ENCODE measurements at regions of chr1 and their contacts with region 1.

Region 1: DNA sequence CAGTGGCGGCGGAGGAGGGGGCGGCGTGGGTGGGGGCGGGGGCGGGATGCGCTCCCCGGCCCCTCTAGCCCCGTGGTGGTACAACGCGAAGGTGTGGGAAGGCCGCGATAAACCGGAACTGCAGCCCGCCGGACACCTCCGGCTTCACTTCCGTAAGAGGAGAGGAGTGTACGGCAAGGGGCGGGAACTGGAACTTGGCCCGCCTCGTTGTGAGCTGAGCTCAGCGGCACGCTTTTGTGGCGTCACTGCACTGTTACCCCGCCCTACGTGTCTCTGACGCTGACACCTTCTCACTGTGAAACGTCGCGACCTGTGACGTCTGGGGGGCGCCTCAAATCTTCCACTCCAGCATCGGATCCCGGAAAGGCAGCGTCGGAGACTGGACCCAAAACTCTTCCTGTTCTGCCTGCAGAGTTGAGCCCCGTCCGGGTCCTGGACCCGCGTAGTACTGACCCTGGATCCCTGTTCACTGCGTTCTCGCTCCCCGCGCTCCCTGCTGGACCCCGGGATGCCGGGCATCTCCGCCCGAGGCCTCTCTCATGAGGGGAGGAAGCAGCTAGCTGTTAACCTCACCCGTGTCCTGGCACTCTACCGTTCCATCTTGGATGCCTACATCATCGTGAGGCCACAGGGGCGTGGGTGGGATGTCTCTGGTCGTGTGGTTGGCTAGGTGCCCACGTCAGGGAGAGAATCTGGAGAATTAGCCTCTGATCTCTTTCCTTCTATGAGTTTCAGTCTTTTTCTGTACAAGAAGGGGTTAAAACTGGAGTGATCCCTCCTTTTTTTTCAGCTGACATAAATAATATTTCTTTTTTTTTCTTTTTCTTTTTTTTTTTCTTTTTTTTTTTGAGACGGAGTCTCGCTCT is at the start of gene ISG20L2:
- DNase-seq: peak; percentile 100
- H3K4me3 ChIP-seq: peak within 1 kb of the TSS; percentile 62 to 90 (median 72)
- H3K27ac ChIP-seq: peak within 1 kb of the TSS; percentile 93 to 99 (median 96)
- H3K4me1 ChIP-seq: peaks cover 0 to 48% (median 46%) of the 10 kb centered on the region in 4 donors
- H3K27me3 ChIP-seq: no peaks in the 10 kb centered on the region
- CTCF ChIP-seq: no peak
- EP300 ChIP-seq: peak in 2 of 4 donors; percentile 36 to 69
- POLR2A ChIP-seq: peak; percentile 17 to 47
- total RNA-seq, gene ISG20L2: 13.6 to 17.6 (median 16.7) TPM

Region 2: DNA sequence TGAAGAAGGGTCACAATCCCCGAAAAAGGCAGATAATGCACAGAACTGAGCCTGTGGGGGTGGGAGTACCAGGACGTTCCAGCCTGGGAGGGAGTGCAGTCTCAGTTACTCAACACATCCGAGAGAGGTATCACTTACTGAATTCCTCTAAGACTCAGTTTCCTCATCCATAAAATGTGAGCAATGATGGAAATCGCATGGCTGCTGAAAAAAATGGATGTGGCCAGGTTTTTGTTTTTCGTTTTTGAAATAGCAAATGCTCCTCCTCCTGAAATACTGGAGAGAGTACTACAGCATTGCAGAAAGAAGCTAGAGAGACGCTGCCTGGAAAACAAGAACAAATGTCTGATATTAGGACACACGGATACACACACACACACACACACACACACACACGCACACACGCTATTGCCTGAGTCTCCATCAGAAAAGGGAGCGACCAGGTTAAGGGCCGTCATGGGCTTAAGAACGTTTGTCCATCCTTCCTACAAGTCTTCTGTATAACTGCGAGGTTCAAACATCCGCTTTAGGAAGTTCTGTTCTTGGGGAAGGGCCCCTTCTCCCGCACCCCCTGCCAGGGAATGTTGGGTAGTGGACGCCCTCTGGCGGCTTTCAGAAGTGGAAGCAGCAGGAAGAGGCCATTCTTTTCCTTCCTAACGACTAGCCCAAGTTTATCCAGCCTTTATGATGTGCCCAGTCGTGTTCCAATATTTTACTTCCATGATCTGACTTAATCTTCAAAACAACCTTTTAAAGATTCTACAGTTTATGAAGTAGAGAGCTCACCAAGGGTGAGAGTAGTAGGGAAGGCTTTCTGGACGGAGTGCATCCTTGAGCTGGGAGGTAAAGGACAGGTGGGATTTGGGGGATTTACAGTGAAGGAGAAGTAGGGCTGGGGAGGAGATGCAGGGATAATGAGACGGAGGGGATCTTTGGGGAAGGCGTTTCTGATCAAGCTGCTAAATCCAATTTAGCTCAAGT is 50.9 kb before region 1 on chr1:
- intact Hi-C with region 1: no loop called
- DNase-seq: peak; percentile 88
- H3K4me3 ChIP-seq: peak overlapping the region; percentile 29 to 53 (median 44)
- H3K27ac ChIP-seq: peak overlapping the region; percentile 42 to 79 (median 72)
- H3K4me1 ChIP-seq: peaks cover 0 to 43% (median 33%) of the 10 kb centered on the region in 4 donors
- H3K27me3 ChIP-seq: peaks cover 5 to 46% (median 20%) of the 10 kb centered on the region in 3 donors
- CTCF ChIP-seq: peak; percentile 84 to 93 (median 89)
- EP300 ChIP-seq: no peak
- POLR2A ChIP-seq: no peak

Region 3: DNA sequence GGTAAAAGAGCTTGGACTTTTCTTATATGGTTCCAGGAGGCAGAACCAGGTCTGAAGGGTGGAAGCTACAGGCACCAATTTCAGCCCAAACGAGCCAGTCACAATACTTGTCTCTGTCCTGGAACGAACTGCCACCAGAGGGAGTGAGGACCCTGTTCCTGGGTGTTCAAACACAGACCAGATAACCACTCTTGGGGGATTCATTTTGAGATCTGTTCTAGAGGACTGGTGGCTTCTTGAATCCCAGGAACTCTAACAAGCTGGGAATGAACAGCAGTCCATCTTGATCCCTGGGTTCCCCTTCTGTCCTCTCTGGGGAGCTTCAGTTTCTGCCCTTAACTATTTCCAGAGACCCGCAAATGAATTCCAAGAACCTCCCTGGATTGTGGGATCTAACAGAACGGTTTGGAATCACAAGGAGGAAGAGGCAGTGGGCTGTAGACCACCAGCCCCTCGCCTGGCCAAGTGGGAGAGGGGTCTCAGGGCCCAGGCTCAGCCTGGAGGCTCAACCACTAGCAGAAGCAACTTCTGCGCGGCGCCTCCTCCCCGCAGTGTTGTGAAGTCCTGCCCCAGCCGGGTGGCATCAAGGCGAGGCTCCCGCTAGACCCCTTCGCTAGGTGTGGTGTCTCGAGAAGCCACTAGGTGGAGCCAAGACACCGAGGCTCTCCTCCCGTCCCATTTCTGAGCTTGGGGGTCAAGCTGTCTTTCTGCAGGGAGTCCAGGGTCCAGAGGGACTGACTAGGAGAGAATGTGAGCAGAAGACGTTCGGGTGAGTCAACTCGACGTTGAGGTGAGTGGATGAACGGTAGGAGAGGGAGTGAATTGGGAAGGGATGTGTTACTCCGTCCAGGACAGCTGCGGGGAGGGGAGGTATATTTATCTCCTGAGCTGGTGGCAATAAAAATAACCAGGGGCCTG is 39.5 kb before region 1 on chr1:
- intact Hi-C with region 1: loop called (anchors 1 kb)
- DNase-seq: peak; percentile 91
- H3K4me3 ChIP-seq: peak overlapping the region in 2 of 4 donors; percentile 0 to 4
- H3K27ac ChIP-seq: peak overlapping the region in 1 of 4 donors; percentile 1
- H3K4me1 ChIP-seq: peaks cover 0 to 26% (median 13%) of the 10 kb centered on the region in 4 donors
- H3K27me3 ChIP-seq: peaks cover 4 to 56% (median 18%) of the 10 kb centered on the region in 3 donors
- CTCF ChIP-seq: peak; percentile 89 to 95 (median 92)
- EP300 ChIP-seq: no peak
- POLR2A ChIP-seq: no peak

Region 4: GRCh38 chr1:156705918-156706656 is 22.7 kb before region 1 on chr1:
- intact Hi-C with region 1: loop called (anchors 2 kb)
- DNase-seq: peak; percentile 88
- H3K4me3 ChIP-seq: peak overlapping the region; percentile 34 to 55 (median 44)
- H3K27ac ChIP-seq: peak overlapping the region; percentile 81 to 87 (median 84)
- H3K4me1 ChIP-seq: peaks cover 0 to 66% (median 65%) of the 10 kb centered on the region in 4 donors
- H3K27me3 ChIP-seq: peaks cover 0 to 6% (median 0%) of the 10 kb centered on the region in 3 donors
- CTCF ChIP-seq: peak; percentile 66 to 86 (median 74)
- EP300 ChIP-seq: no peak
- POLR2A ChIP-seq: no peak

Region 5: DNA sequence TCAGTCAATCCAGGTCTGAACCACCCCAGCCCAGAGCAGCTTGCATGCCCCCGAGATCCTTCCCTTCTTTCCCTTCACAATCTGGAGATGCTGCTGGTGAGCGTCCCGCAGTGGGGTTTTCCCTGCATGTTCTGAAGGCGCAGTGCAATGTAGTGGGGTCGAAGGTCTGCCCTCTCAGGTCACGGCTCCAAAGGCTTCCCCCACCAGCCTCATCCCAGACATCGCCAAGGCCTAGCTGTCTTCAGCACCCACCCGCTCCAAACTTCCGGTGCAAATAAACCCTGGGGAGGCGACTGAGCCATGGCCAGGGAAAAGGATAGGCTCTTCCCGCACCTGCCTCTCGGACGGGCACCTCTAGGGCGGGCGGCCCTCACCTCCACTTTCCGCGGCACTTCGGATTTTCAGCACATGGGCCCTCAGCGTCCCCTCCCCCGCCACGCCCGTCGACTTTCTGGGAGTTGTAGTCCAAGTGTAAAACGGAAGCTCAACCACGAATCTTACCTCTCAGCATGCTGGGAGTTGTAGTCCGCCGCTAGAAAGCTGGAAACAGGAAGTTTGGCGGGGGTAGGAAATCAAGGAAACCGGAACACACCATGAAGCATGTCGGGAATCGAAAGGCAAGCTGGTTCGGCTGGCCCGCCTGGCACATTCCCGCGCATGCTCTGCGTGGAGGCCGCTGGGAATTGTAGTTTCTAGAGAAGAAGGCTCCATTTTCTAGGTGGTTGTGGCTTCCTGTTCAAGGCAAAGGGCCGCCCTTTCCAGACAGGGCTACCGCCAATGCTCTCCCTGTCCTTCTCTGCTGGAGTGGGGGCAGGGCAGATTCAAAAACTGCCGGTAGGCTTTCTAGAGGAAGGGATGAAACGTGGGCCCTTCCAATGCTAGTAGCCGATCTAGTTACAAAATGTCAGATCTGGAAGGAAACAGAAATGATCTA is 12.1 kb after region 1 on chr1 and contains the start of gene MRPL24:
- intact Hi-C with region 1: loop called (anchors 1 kb)
- DNase-seq: peak; percentile 99
- H3K4me3 ChIP-seq: peak within 1 kb of the TSS; percentile 64 to 79 (median 74)
- H3K27ac ChIP-seq: peak within 1 kb of the TSS; percentile 83 to 88 (median 86)
- H3K4me1 ChIP-seq: peaks cover 0 to 33% (median 29%) of the 10 kb centered on the region in 4 donors
- H3K27me3 ChIP-seq: no peaks in the 10 kb centered on the region
- CTCF ChIP-seq: no peak
- EP300 ChIP-seq: peak in 1 of 4 donors; percentile 44
- POLR2A ChIP-seq: no peak
- total RNA-seq, gene MRPL24: 53.0 to 68.5 (median 59.7) TPM

Region 6: DNA sequence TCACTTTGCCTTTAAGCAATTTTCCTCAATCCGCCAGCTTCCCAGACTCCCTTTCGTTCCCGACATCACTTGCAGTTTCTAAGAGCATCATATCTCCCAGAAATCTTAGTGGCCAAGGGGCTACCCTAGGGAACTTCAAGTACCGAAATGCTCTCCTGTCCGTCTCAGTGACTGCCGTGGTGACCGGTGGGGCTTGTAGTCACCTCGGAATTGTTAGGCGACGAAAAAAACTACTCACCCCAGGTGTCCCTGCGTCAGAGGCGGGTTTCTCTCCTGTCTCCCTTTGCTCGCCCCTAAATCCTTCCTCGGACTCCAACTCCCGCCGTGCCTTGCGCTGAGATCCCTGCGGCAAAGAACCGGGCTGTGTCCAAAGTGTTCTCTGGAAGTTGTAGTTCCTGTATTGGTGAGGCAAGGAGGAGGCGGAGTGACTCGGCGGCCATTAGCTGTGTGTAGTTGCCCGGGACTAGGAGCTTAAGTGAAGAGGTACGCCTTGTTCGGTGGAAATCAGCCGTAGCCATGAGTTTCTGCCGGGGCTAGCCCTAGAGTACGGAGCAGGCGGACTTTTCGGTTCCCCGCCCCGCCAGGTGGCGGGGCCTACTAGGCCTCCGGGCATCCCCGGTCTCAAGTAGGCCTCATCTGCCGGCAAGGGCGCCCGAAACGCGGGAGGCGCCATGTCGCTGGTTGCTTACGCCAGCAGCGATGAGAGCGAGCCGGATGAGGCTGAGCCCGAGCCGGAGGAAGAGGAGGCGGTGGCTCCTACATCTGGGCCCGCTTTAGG is 38.5 kb after region 1 on chr1 and contains the start of gene PRCC:
- intact Hi-C with region 1: loop called (anchors 5 kb)
- DNase-seq: peak; percentile 99
- H3K4me3 ChIP-seq: peak within 1 kb of the TSS; percentile 67 to 99 (median 86)
- H3K27ac ChIP-seq: peak within 1 kb of the TSS; percentile 92 to 96 (median 94)
- H3K4me1 ChIP-seq: peaks cover 0 to 50% (median 47%) of the 10 kb centered on the region in 4 donors
- H3K27me3 ChIP-seq: no peaks in the 10 kb centered on the region
- CTCF ChIP-seq: no peak
- EP300 ChIP-seq: peak in 1 of 4 donors; percentile 60
- POLR2A ChIP-seq: peak in 1 of 2 donors; percentile 19
- total RNA-seq, gene PRCC: 27.5 to 34.1 (median 32.4) TPM

Region 7: GRCh38 chr1:156786655-156787054 is 57.8 kb after region 1 on chr1:
- intact Hi-C with region 1: no loop called
- DNase-seq: peak; percentile 56
- H3K4me3 ChIP-seq: no peak overlapping the region
- H3K27ac ChIP-seq: no peak overlapping the region
- H3K4me1 ChIP-seq: peaks cover 0 to 5% (median 2%) of the 10 kb centered on the region in 4 donors
- H3K27me3 ChIP-seq: no peaks in the 10 kb centered on the region
- CTCF ChIP-seq: no peak
- EP300 ChIP-seq: no peak
- POLR2A ChIP-seq: no peak

Region 8: DNA sequence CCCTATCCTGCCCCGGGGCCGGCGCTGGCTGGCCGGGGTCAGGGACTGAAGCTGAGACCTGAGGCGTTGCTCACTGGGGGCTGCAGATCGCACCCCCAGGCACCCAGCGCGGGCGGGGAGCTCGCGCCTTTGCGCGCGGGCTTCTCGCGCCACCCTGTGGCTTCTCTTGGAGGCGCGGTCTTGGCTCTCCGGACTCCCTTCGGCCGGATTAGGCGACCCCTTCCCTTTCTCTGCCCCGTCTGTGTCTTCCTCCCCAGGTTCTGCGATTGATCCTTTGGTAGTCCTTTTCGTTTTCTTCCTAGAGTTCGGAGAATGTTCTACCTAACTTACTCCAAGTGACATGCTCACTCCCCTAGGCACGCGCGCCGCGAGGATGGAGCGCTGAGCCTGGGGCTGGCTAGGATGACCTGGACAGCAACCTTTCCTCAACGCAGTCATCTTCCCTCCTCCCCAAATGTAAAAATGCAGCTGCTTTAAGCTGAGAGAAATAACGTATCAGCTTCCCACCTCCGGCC is 131.3 kb after region 1 on chr1:
- intact Hi-C with region 1: loop called (anchors 10 kb)
- DNase-seq: peak; percentile 74
- H3K4me3 ChIP-seq: peak overlapping the region; percentile 4 to 35 (median 19)
- H3K27ac ChIP-seq: no peak overlapping the region
- H3K4me1 ChIP-seq: peaks cover 0 to 32% (median 28%) of the 10 kb centered on the region in 4 donors
- H3K27me3 ChIP-seq: peaks cover 21 to 79% (median 67%) of the 10 kb centered on the region in 3 donors
- CTCF ChIP-seq: peak; percentile 33 to 70 (median 58)
- EP300 ChIP-seq: no peak
- POLR2A ChIP-seq: no peak

Measured in sigmoid colon (tissue), 7 donors.